Vagina (tissue), 2 donors: ENCODE measurements at regions of chr21 and their contacts with region 1.

Region 1: GRCh38 chr21:16002874-16003466 is 273.2 kb downstream of the USP25 start:
- DNase-seq: no peak
- H3K4me3 ChIP-seq: no peak overlapping the region
- H3K27ac ChIP-seq: no peak overlapping the region
- H3K4me1 ChIP-seq: peaks cover 10% of the 10 kb centered on the region
- H3K27me3 ChIP-seq: no peaks in the 10 kb centered on the region
- CTCF ChIP-seq: peak in 2 of 3 experiments; percentile 48 to 56
- POLR2A ChIP-seq: no peak

Region 2: DNA sequence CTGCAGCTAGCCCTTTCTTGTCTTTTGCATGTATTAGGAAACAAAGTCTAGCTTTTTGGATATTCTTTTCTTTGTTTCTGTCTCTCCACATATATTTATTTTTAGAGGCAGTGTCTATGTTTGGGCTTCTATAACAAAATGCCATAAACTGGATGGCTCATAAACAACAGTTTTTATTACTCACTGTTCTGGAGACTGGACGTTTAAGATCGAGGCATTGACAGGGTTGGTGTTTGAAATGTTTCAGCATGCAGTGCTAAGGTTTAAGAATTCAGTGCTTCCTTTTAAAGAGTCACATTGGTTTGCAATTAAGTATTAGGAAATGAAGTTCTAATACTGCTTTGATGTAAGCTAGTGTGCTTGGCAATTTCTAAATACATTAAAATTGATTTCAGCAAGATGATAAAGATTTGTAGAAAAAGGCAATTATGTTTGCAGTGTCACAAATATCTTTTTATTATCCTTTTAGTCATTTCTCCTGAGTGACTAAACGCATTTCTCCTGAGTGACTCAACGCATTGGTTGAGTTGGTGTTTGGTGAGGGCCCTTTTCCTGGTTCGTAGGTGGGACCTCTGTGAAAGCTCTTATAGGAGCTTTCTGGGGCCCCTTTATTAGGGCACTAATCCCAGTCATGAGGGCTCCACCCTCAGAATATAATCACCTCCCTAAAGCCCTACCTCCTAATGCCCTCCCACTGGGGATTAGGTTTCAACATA is 43.8 kb after region 1 on chr21:
- intact Hi-C with region 1: no loop called
- DNase-seq: no peak
- H3K4me3 ChIP-seq: no peak overlapping the region
- H3K27ac ChIP-seq: peak overlapping the region; percentile 33
- H3K4me1 ChIP-seq: no peaks in the 10 kb centered on the region
- H3K27me3 ChIP-seq: no peaks in the 10 kb centered on the region
- CTCF ChIP-seq: no peak
- POLR2A ChIP-seq: no peak

Region 3: DNA sequence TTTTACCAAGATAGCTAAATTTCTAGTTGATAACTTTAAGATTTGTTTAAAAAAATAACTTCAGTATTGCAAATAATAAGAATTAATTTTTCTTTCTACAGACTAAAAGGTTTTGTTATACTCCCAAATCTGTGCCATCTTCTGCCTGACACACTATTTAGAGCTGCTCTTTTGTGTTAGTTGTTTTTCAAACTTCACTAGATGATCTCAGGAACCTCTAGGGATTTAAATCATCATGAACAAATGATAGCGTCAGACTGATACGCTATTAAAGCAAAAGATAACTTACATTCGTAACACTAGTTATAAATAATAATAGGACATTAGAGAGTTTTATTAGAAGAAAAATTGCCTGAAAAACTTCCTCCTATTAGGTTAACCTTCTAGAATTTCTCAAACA is 1266.8 kb after region 1 on chr21:
- intact Hi-C with region 1: loop called (anchors 10 kb)
- DNase-seq: no peak
- H3K4me3 ChIP-seq: no peak overlapping the region
- H3K27ac ChIP-seq: peak overlapping the region; percentile 23
- H3K4me1 ChIP-seq: no peaks in the 10 kb centered on the region
- H3K27me3 ChIP-seq: no peaks in the 10 kb centered on the region
- CTCF ChIP-seq: no peak
- POLR2A ChIP-seq: no peak